ENCODE measurements at regions of chr12 and their contacts with region 1.

Region 1: DNA sequence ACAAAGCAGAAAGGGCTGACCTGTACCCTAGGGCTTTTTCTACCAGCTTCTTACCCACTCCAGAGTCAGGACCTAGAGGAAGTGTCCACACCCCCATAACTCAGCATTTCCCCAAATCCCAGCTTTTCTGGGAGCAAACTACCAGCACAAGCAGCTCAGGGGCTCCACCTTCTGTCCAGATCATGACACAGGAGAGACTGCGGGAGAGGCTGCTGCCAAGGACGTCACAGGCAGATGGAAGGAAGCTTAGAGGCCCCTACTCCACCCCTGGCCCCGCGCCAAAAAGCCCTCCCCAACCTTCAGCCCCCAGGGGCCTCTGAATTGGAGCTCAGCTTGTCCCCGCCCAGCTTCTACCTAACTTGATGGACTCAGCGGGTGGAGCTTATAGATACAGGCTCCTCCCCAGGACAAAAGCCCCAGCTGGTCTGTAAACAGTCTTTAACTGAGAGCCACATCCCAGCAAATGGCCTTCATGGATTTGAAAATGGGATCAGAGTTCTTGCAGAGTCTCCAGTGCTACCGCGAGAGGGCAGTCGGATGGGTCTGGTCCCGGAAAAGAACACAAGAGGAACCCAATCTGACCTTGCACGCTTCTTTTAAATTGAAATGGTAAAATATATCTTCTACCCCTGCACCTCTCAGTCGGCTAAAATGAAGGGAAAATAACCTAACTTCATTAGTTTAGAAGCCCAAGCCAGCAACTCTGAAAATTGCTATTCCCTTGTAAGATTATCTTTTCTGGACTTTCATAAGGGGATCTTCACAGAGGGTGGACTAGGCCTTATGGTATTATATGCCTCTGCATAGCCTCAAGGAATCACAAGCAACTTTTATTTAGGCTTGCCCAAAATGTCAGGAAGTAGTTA is 6.8 kb upstream of the BAZ2A start:
- DNase-seq: peak; percentile 77
- H3K4me3 ChIP-seq: peak overlapping the region; percentile 59 to 95 (median 89)
- H3K27ac ChIP-seq: peak overlapping the region; percentile 97 to 99 (median 98)
- H3K4me1 ChIP-seq: peaks cover 37 to 87% (median 41%) of the 10 kb centered on the region in 3 donors
- H3K27me3 ChIP-seq: no peaks in the 10 kb centered on the region
- CTCF ChIP-seq: peak; percentile 32 to 61 (median 46)
- POLR2A ChIP-seq: no peak

Region 2: GRCh38 chr12:56541631-56542030 is 95.3 kb before region 1 on chr12:
- intact Hi-C with region 1: no loop called
- DNase-seq: no peak
- H3K4me3 ChIP-seq: no peak overlapping the region
- H3K27ac ChIP-seq: no peak overlapping the region
- H3K4me1 ChIP-seq: no peaks in the 10 kb centered on the region
- H3K27me3 ChIP-seq: no peaks in the 10 kb centered on the region
- CTCF ChIP-seq: no peak
- POLR2A ChIP-seq: no peak

Region 3: GRCh38 chr12:56688129-56688845 is 51.4 kb after region 1 on chr12 and contains the start of gene PTGES3:
- intact Hi-C with region 1: loop called (anchors 5 kb)
- DNase-seq: peak; percentile 83
- H3K4me3 ChIP-seq: peak within 1 kb of the TSS; percentile 81 to 99 (median 94)
- H3K27ac ChIP-seq: peak within 1 kb of the TSS; percentile 98 to 100 (median 100)
- H3K4me1 ChIP-seq: peaks cover 7 to 48% (median 13%) of the 10 kb centered on the region in 3 donors
- H3K27me3 ChIP-seq: no peaks in the 10 kb centered on the region
- CTCF ChIP-seq: peak in 1 of 6 experiments; percentile 9
- POLR2A ChIP-seq: peak in 3 of 4 donors; percentile 73 to 97 (median 90)
- total RNA-seq, gene PTGES3: 61.9 to 157 (median 100) TPM